Cardiac septum (tissue), 1 donor: ENCODE measurements at regions of chr20 and their contacts with region 1.

Region 1: GRCh38 chr20:48620519-48621254 is 207.1 kb downstream of the PREX1 start:
- DNase-seq: peak; percentile 91

Region 2: DNA sequence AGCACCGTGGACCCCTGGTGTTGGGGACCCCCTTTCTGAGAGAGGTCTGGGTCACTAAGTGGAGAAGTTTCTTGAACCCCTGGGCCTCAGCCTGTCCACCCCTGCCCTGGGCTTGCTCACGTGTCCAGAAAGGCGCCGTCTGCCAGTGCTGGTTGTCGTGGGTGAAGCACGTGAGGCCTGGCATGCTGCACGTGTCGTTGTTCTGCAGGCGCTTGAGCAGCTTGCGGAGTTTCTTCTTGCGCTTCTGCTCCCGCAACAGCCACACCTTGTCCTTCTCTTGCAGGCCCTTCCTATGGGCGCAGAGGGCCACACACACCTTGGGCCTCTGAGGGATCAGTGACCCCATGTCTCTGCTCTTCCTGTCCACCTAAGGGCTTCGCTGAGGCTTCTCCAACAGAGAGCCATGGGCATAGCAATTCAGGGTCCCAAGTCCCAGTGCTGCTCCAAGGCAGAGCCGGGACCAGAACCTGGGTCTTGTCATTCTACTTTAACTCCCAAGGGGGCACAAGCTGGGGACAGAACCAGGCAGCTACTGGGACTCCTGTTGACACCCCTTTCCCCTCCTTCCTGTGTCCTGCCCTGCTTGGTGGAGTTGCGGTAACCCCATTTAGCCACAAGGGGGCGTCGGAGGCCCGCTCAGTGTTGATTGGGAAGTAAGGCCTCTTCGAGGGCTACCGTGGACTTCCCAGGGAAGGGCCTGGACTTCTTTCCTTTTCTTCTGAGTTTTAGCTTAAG is 957.2 kb before region 1 on chr20:
- intact Hi-C with region 1: loop called (anchors 2 kb)
- DNase-seq: peak; percentile 86

Region 3: DNA sequence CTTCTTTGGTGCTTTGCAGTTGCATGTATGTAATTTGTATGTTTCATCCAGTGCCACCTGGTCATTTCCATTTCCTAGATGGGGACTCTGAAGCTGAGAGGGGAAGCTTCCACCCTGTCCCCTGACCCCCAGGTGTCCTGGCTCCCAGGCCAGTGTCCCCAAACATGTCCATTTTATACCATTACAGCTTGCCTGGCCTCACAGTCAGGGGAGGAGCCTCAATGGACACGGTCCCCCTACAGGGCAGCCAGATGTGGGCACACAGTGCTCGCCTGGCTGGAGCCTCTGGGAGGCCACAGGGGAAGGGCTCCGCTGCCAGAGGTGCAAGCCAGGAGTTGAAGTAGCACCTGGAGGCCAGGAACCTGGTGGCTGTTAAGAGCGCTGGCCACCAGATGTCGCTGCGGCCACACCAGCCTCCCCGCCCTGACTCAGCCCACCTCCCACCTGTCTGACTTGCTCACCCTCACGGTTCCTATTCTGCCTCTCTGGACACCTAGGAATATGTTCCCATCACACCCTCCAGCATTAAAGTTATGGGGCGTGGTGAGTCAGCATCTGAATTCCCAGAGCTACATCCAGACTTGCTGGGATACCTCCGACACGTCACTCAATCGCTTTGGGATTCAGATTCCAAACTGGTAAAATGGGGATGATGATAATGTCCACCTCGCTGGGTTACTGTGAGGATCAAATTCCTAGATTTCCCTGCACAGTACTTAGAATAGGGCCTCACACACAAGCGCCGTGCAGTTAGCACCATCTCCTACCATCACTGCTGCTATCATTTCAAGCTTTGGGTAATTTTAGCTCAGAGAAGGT is 942.8 kb before region 1 on chr20:
- intact Hi-C with region 1: loop called (anchors 2 kb)
- DNase-seq: peak; percentile 80

Region 4: DNA sequence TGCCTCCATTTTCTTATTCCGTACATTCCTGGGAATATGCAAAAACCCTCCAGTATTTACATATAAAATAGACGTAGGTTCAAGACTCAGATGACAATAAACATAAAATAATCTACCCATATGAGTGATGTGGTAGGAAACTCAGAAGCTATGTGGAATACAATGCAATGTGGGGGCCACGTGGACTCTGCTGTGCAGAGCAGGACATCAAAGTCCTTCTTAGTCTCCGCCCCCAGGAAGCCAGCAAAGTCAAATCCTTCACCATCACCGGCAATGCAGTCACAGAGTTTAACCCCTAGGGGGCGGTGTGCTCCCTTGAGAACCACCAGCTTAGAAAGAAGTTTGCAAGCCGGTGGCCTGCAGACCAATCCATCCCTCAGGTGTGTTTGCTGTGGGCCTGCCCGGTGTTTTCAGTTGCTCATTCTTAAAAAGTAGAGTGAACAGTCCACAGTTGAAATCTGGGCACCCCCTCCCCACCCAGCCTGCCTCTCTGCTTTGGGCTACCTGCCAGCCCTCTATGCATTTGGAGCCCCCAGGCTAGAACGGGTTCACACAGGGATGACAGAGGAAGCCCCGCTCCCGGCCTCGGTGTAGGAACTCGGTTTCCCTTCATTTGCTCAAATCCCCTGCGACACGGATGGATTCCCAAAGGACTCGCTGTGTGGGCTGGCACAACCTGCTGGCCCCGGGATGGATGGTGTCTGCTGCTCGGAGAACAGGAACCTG is 895.3 kb before region 1 on chr20:
- intact Hi-C with region 1: loop called (anchors 2 kb)
- DNase-seq: peak; percentile 89

Region 5: GRCh38 chr20:48051794-48052474 is 568.8 kb before region 1 on chr20:
- intact Hi-C with region 1: no loop called
- DNase-seq: no peak

Region 6: DNA sequence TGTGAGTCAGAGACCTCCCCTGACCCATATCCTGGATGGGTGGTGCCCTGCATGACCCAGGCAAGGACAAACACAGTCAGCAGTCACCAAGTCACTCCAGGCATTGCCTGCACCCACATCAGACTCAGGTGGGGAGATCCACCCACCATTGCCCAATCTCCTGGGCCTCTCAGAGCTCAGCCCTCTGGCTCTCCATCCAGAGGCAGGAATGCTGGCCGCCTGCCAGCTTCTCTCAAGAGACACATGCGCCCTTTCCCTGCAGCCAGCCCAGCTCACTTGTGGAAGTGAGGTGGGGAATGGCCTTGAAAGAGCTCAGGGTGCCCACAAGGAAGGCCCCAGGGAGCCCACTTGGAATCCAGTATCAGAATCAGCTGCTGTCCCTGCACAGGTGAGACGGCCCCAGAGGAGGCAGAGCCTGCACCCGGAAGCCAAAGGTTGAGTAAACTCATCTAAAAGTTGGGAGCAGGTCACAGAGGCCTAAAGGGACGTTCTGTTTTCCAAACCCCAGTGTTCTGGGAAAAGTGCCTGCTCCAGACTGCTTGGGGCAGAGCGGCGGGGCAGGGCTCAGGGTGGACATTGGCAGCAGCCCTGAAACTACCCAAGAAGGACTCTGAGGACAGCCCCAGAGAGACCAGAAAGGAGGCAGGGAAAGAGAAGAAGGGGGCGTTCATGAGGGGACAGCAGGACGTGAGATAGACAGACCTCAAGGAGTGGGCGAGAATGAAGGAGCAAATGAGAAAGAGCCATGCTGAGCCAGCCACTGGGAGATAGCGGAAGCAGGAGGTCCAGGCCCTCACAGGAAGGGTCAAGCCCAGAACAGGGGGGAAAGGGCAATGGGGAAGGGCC is 77.4 kb after region 1 on chr20:
- intact Hi-C with region 1: no loop called
- DNase-seq: peak; percentile 88